Heart right ventricle (tissue), 16 donors: ENCODE measurements at regions of chr16 and their contacts with region 1.

Region 1: DNA sequence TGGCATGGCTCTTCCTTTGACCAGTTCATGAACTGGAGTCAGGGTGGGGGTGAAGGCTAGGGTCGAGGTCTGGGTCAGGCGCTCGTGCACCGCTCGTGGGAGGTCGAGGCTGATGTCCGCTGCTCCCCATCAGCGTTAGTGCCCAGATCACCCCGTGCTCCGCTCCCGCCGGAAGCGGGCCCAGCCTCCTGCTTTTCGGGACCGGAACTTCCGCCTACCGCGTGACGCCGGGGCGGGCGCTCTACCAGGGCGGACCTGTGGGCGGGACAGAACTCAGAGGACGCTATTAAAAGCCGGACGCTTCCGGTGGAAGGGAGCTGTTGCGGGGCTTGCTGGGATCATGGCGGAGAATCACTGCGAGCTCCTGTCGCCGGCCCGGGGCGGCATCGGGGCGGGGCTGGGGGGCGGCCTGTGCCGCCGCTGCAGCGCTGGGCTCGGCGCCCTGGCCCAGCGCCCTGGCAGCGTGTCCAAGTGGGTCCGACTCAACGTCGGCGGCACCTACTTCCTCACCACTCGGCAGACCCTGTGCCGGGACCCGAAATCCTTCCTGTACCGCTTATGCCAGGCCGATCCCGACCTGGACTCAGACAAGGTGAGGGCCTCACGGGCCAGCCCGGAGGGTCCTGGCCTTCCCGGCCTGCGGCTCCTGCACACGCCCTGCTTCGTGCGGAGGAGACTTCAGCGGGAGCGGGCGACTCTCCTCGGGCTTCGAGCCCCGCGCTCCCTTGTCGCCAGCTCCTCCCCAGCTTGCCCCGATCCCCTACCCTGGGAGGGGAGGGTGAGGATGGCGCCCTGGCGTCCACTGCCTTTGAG is at the start of gene KCTD5:
- DNase-seq: peak; percentile 95 to 97
- ATAC-seq: peak; percentile 93 to 98 (median 97)
- H3K4me3 ChIP-seq: peak within 1 kb of the TSS; percentile 73 to 99 (median 92)
- H3K27ac ChIP-seq: peak within 1 kb of the TSS; percentile 71 to 96 (median 90)
- H3K4me1 ChIP-seq: peaks cover 0 to 33% (median 27%) of the 10 kb centered on the region in 9 donors
- H3K27me3 ChIP-seq: no peaks in the 10 kb centered on the region
- CTCF ChIP-seq: peak in 1 of 9 donors; percentile 5
- total RNA-seq, gene KCTD5: 8.5 to 22.4 (median 11.7) TPM

Region 2: GRCh38 chr16:2715519-2715918 is 33.1 kb after region 1 on chr16:
- intact Hi-C with region 1: loop called in 3 of 10 experiments (anchors 2 to 5 kb)
- DNase-seq: peak; percentile 75
- ATAC-seq: peak; percentile 61 to 85 (median 72)
- H3K4me3 ChIP-seq: peak overlapping the region in 5 of 10 donors; percentile 14 to 28 (median 15)
- H3K27ac ChIP-seq: no peak overlapping the region
- H3K4me1 ChIP-seq: peaks cover 3 to 31% (median 21%) of the 10 kb centered on the region in 9 donors
- H3K27me3 ChIP-seq: no peaks in the 10 kb centered on the region
- CTCF ChIP-seq: no peak